Heart right ventricle (tissue), 16 donors: ENCODE measurements at regions of chr20 and their contacts with region 1.

Region 1: GRCh38 chr20:44180814-44181213 is 6.2 kb downstream of the JPH2 start:
- DNase-seq: peak; percentile 53 to 83
- ATAC-seq: peak; percentile 75 to 91 (median 86)
- H3K4me3 ChIP-seq: peak overlapping the region in 6 of 10 donors; percentile 27 to 73 (median 63)
- H3K27ac ChIP-seq: peak overlapping the region; percentile 69 to 97 (median 84)
- H3K4me1 ChIP-seq: peaks cover 2 to 77% (median 22%) of the 10 kb centered on the region in 9 donors
- H3K27me3 ChIP-seq: peaks cover 0 to 23% (median 0%) of the 10 kb centered on the region in 7 donors
- CTCF ChIP-seq: no peak

Region 2: DNA sequence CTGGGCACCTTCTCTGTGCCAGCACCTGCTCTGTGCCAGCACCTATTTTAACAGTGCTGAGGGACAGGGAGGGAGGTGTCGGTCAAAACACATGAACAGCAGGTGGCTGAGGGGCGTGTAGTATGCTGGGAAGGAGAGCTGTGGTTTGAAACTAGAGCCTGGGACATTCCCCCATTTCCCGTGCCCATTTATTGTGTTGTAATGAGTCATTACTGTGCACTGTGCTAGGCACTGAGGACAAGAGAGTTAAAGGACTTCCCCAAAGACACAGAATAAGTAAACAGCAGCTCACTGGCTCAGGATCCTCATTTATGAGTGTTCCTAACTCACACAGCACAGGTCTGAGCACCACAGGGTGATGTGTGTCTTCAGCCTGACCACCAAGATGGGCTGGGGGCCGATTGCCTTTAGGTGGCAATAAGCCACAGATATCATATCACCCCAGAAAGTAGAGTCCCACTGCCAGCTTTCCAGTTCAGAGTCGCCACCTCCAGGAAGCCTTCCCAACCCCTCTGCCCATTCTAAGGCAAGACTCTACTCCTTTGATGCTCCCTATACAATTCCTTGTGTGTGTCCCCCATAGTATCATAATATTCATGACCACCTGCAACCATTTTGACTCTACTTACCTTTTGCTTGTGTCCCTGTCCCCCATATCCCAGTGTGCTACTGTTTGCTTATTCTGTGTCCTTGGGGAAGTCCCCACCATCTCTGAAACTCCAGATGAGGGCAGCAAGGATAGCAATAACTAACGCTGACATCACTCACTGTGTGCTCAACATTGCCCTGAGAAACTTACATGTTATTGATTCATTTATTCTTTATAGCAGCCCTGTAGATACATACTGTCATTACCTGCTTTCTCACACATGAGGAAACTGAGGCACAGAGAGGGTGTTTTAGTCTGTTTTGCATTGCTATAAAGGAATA is 178.9 kb before region 1 on chr20:
- intact Hi-C with region 1: no loop called
- DNase-seq: no peak
- ATAC-seq: peak in 1 of 8 donors; percentile 41
- H3K4me3 ChIP-seq: no peak overlapping the region
- H3K27ac ChIP-seq: no peak overlapping the region
- H3K4me1 ChIP-seq: no peaks in the 10 kb centered on the region
- H3K27me3 ChIP-seq: no peaks in the 10 kb centered on the region
- CTCF ChIP-seq: no peak

Region 3: GRCh38 chr20:44137210-44137801 is 43.5 kb before region 1 on chr20:
- intact Hi-C with region 1: loop called in 5 of 10 experiments (anchors 2 to 5 kb)
- DNase-seq: peak; percentile 68 to 72
- ATAC-seq: peak; percentile 66 to 85 (median 77)
- H3K4me3 ChIP-seq: no peak overlapping the region
- H3K27ac ChIP-seq: peak overlapping the region; percentile 29 to 91 (median 88)
- H3K4me1 ChIP-seq: peaks cover 9 to 74% (median 41%) of the 10 kb centered on the region in 9 donors
- H3K27me3 ChIP-seq: peaks cover 0 to 4% (median 0%) of the 10 kb centered on the region in 7 donors
- CTCF ChIP-seq: no peak

Region 4: DNA sequence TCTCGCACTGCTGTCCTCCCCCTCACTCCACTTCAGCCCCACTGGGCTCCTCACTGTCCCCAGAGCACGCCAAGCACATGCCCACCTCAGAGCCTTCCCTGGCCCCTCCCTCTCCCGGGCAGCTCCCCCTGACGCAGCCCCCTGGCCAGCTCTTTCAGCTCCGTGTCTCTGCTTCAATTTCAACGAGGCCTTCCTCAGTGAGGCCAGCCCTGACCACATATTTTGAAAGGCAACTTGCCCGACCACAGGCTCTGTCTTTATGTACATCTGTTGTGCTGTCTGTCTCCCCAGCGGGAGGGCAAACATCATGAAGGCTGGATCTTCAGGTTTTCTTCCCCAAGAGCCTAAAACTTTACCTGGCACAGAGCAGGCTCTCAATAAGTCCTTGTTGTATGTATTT is 38.4 kb before region 1 on chr20:
- intact Hi-C with region 1: loop called in 5 of 10 experiments (anchors 2 to 5 kb)
- DNase-seq: no peak
- ATAC-seq: peak in 5 of 8 donors; percentile 3 to 22 (median 10)
- H3K4me3 ChIP-seq: no peak overlapping the region
- H3K27ac ChIP-seq: peak overlapping the region; percentile 36 to 91 (median 82)
- H3K4me1 ChIP-seq: peaks cover 2 to 98% (median 54%) of the 10 kb centered on the region in 9 donors
- H3K27me3 ChIP-seq: peaks cover 0 to 4% (median 0%) of the 10 kb centered on the region in 7 donors
- CTCF ChIP-seq: no peak